ENCODE measurements at regions of chr2 and their contacts with region 1.

Region 1: GRCh38 chr2:42281416-42282081 is 79.5 kb downstream of the COX7A2L start:
- DNase-seq: no peak
- H3K4me3 Mint-ChIP-seq: no peak overlapping the region
- H3K27ac Mint-ChIP-seq: no peak overlapping the region
- H3K4me1 Mint-ChIP-seq: peaks cover 13% of the 10 kb centered on the region
- H3K27me3 Mint-ChIP-seq: no peaks in the 10 kb centered on the region

Region 2: GRCh38 chr2:42268528-42269151 is 12.9 kb before region 1 on chr2:
- CTCF ChIA-PET with region 1: interaction called, 3 read pairs
- POLR2A ChIA-PET with region 1: no interaction called
- intact Hi-C with region 1: loop called (anchors 2 kb)
- DNase-seq: no peak
- H3K4me3 Mint-ChIP-seq: no peak overlapping the region
- H3K27ac Mint-ChIP-seq: no peak overlapping the region
- H3K4me1 Mint-ChIP-seq: peaks cover 20% of the 10 kb centered on the region
- H3K27me3 Mint-ChIP-seq: no peaks in the 10 kb centered on the region